ENCODE measurements at regions of chr16 and their contacts with region 1.

Region 1: DNA sequence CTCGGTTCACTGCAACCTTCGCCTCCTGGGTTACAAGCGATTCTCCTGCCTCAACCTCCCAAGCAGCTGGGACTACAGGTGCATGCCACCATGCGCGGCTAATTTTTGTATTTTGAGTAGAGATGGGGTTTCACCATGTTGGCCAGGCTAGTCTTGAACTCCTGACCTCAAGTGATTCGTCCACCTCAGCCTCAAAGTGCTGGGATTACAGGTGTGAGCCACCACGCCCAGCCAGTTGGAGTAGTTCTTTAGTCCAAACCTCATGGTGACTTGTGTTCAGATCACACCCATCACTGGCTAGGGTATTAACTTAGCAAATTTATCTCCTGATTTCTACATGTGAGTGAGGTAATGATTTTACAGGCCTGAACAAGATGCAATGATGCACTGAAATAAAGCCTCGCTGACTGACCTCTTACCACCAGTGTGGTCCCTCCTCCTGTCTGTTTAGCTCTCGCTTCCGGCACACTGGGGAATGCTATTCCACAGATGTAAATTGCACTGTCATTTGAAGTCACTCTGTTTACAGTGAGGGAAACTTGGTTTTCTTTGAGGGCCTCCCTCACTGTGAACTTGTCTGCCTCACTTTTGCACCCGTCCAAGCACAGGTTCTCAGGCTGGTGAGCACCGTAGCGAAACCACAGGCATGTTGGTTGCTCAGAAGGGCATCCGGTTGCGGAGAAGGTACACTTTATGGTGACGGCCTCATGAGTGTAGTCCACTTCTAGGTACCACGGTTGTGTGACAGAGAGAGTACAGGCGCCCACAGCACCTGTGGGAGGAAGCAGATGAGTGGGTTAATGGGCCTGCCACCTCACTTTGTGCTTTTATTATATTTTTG is 5.5 kb downstream of the IGSF6 start:
- DNase-seq: peak; percentile 77
- ATAC-seq: peak; percentile 86
- H3K4me3 ChIP-seq: peak overlapping the region in 2 of 5 experiments; percentile 2 to 8
- H3K4me3 Mint-ChIP-seq: peak overlapping the region; percentile 73
- H3K27ac ChIP-seq: peak overlapping the region; percentile 83 to 92
- H3K27ac Mint-ChIP-seq: peak overlapping the region; percentile 89
- H3K4me1 ChIP-seq: peaks cover 76 to 79% of the 10 kb centered on the region in 2 donors
- H3K4me1 Mint-ChIP-seq: peaks cover 69% of the 10 kb centered on the region
- H3K27me3 ChIP-seq: no peaks in the 10 kb centered on the region
- H3K27me3 Mint-ChIP-seq: no peaks in the 10 kb centered on the region
- CTCF ChIP-seq: no peak

Region 2: GRCh38 chr16:21584817-21585216 is 62.1 kb before region 1 on chr16:
- CTCF ChIA-PET with region 1: interaction called, 66 read pairs
- POLR2A ChIA-PET with region 1: no interaction called
- intact Hi-C with region 1: no loop called
- DNase-seq: no peak
- ATAC-seq: no peak
- H3K4me3 ChIP-seq: no peak overlapping the region
- H3K4me3 Mint-ChIP-seq: no peak overlapping the region
- H3K27ac ChIP-seq: no peak overlapping the region
- H3K27ac Mint-ChIP-seq: no peak overlapping the region
- H3K4me1 ChIP-seq: peaks cover 0 to 9% of the 10 kb centered on the region in 2 donors
- H3K4me1 Mint-ChIP-seq: peaks cover 6% of the 10 kb centered on the region
- H3K27me3 ChIP-seq: no peaks in the 10 kb centered on the region
- H3K27me3 Mint-ChIP-seq: no peaks in the 10 kb centered on the region
- CTCF ChIP-seq: no peak

Region 3: GRCh38 chr16:21590287-21590686 is 56.7 kb before region 1 on chr16:
- CTCF ChIA-PET with region 1: interaction called, 15 read pairs
- POLR2A ChIA-PET with region 1: no interaction called
- intact Hi-C with region 1: no loop called
- DNase-seq: no peak
- ATAC-seq: no peak
- H3K4me3 ChIP-seq: peak overlapping the region in 1 of 5 experiments; percentile 11
- H3K4me3 Mint-ChIP-seq: no peak overlapping the region
- H3K27ac ChIP-seq: no peak overlapping the region
- H3K27ac Mint-ChIP-seq: peak overlapping the region; percentile 63
- H3K4me1 ChIP-seq: peaks cover 5 to 8% of the 10 kb centered on the region in 2 donors
- H3K4me1 Mint-ChIP-seq: peaks cover 14% of the 10 kb centered on the region
- H3K27me3 ChIP-seq: no peaks in the 10 kb centered on the region
- H3K27me3 Mint-ChIP-seq: peaks cover 4% of the 10 kb centered on the region
- CTCF ChIP-seq: no peak

Region 4: DNA sequence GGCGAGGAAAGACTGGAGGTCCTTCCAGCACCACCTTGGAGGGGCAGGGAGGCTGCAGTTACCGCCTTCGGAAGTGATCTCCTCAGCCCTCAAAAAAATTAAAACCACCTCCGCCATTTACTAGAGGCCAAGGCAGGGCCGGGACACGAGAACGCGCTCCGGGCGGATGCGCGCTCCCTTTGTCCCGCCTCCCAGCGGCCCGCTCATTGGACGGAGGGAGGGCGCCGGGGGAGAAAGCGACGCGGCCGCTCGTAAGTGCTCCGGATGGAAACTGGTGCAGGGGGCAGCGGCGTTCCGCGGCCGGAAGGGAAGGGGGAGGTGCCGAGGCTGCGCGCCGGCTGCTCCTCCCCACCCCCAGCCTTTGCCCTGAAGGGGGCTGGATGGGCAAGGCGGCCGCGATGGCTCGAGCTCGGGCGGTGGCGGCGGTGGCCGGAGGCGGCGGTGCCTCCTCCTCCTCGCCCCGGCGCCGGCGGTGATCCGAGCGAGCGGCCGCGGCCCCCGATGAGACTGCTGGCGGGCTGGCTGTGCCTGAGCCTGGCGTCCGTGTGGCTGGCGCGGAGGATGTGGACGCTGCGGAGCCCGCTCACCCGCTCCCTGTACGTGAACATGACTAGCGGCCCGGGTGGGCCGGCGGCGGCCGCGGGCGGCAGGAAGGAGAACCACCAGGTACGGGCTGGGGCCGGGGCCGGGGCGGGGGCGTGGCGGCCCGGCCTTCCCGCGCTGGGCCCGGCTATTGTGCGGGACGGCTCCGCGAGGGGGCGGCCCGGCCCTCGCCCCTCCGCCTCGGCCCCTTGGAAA is 47.5 kb before region 1 on chr16 and contains the start of gene METTL9:
- CTCF ChIA-PET with region 1: interaction called, 5 read pairs
- POLR2A ChIA-PET with region 1: no interaction called
- intact Hi-C with region 1: loop called (anchors 1 kb)
- DNase-seq: peak; percentile 97
- ATAC-seq: peak; percentile 89
- H3K4me3 ChIP-seq: peak within 1 kb of the TSS; percentile 70 to 95 (median 82)
- H3K4me3 Mint-ChIP-seq: peak within 1 kb of the TSS; percentile 88
- H3K27ac ChIP-seq: peak within 1 kb of the TSS; percentile 83 to 91
- H3K27ac Mint-ChIP-seq: peak within 1 kb of the TSS; percentile 94
- H3K4me1 ChIP-seq: peaks cover 13 to 17% of the 10 kb centered on the region in 2 donors
- H3K4me1 Mint-ChIP-seq: peaks cover 35% of the 10 kb centered on the region
- H3K27me3 ChIP-seq: no peaks in the 10 kb centered on the region
- H3K27me3 Mint-ChIP-seq: no peaks in the 10 kb centered on the region
- CTCF ChIP-seq: no peak
- total RNA-seq, gene METTL9: 57.3 and 57.7 TPM in 2 replicates

Region 5: DNA sequence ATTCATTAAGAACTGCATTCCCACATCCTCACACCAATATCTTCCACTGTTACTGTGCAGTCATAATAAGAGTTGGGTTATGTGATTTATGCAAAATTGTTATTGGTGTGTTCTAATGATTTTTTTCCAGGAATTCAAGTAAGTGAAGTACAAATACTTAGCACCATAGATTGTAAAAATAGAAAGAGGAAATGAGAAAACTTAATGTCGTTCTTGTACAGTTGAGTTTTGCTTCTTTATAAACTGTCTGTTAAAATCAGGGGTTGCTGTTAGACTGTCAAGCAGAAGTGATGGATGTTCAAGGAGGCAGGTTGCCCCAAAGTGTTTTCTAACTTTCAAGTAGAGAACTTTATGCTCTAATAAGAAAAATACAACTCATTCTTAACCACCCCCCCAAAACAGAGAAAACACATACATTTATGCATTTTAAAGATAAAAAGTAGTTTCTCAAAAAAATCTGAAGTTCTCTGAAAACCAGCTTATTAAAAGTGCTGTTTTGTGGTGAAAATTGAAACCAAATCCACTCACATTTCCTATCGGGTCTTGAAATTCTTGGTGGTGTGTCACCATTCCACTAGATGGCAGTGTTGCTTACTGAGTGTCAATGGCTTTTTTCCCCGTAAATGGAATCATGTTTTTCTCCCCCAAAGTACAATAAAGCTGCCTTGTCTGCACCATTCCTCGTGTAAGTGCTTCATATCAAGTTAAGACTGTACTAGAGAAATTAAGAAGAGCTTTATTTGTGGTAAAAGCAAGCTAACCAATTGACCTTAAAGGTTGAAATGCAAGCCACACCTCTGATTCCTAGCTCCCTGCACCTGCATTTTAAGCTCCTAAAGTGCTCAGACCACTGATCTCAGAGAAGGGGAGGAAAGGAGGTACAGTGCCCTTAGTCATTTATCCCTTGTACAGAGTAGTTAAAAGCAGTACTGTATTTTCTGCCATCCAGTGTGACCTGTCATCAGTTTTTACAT is 10.1 kb after region 1 on chr16:
- CTCF ChIA-PET with region 1: interaction called, 159 read pairs
- POLR2A ChIA-PET with region 1: interaction called, 4 read pairs
- intact Hi-C with region 1: loop called (anchors 1 kb)
- DNase-seq: peak; percentile 81
- ATAC-seq: peak; percentile 82
- H3K4me3 ChIP-seq: peak overlapping the region in 3 of 5 experiments; percentile 0 to 47 (median 44)
- H3K4me3 Mint-ChIP-seq: peak overlapping the region; percentile 79
- H3K27ac ChIP-seq: peak overlapping the region; percentile 51 to 78
- H3K27ac Mint-ChIP-seq: peak overlapping the region; percentile 88
- H3K4me1 ChIP-seq: peaks cover 74 to 77% of the 10 kb centered on the region in 2 donors
- H3K4me1 Mint-ChIP-seq: peaks cover 82% of the 10 kb centered on the region
- H3K27me3 ChIP-seq: no peaks in the 10 kb centered on the region
- H3K27me3 Mint-ChIP-seq: no peaks in the 10 kb centered on the region
- CTCF ChIP-seq: peak; percentile 92

Region 6: DNA sequence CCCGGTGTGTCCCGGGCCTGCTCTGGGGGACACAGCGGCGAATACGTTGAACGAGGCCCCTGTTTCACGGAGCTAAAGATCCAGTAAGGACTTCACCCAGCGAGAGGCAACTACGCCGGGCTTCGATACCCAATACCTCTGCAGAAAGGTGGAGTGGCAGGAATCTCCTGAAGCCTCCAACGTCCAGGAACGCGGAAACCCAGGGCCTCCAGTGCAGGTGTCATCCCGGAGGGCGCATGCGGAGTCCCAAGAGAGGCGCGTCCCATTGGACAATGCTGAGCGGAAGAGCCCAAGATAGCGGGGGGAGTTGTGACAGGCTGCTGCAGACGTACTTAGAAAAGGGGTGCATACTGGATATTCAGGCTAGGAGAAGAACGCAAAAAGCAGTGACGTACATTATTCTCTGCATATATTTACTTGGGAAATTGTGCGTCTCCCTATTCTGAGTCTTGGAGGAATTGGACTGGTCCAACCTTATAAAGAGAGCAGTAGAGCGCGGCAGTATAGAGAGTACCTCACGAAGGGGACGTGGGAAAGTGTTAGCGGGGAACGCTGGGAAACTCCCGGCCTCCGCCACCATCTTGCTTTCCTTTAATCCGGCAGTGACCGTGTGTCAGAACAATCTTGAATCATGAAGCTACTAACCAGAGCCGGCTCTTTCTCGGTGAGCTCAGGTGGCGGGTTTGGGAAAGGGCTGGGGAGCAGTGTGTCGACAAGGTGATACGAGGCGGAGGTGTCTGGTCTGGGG is 306.0 kb after region 1 on chr16 and contains the start of gene UQCRC2:
- CTCF ChIA-PET with region 1: no interaction called
- POLR2A ChIA-PET with region 1: no interaction called
- intact Hi-C with region 1: loop called (anchors 5 kb)
- DNase-seq: peak; percentile 96
- ATAC-seq: peak; percentile 91
- H3K4me3 ChIP-seq: peak within 1 kb of the TSS; percentile 74 to 100 (median 97)
- H3K4me3 Mint-ChIP-seq: peak within 1 kb of the TSS; percentile 98
- H3K27ac ChIP-seq: peak within 1 kb of the TSS; percentile 88 to 97
- H3K27ac Mint-ChIP-seq: peak within 1 kb of the TSS; percentile 97
- H3K4me1 ChIP-seq: peaks cover 34 to 45% of the 10 kb centered on the region in 2 donors
- H3K4me1 Mint-ChIP-seq: peaks cover 65% of the 10 kb centered on the region
- H3K27me3 ChIP-seq: no peaks in the 10 kb centered on the region
- H3K27me3 Mint-ChIP-seq: no peaks in the 10 kb centered on the region
- CTCF ChIP-seq: no peak
- total RNA-seq, gene UQCRC2: 150 and 155 TPM in 2 replicates

Region 7: DNA sequence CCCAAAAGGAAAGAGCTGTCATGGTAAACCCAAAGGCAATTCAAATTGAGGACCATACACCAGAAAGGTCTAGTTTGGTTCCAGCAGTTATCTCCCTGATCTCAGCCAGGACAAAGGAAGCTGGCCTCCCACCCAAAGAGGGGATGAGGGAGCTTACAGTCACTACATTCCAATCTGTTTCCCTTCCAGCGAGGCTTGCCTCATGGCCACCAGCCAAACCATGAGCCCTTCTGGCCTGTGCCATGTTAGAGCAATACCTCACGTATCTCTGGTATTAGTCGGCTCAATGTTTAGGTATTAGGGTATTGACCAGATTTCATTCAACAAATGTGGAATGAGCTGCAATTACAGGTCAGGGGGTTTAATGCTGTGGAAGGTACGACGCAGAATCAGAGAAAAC is 1940.8 kb after region 1 on chr16:
- CTCF ChIA-PET with region 1: no interaction called
- POLR2A ChIA-PET with region 1: no interaction called
- intact Hi-C with region 1: no loop called
- DNase-seq: no peak
- ATAC-seq: no peak
- H3K4me3 ChIP-seq: no peak overlapping the region
- H3K4me3 Mint-ChIP-seq: no peak overlapping the region
- H3K27ac ChIP-seq: no peak overlapping the region
- H3K27ac Mint-ChIP-seq: no peak overlapping the region
- H3K4me1 ChIP-seq: no peaks in the 10 kb centered on the region
- H3K4me1 Mint-ChIP-seq: peaks cover 3% of the 10 kb centered on the region
- H3K27me3 ChIP-seq: no peaks in the 10 kb centered on the region
- H3K27me3 Mint-ChIP-seq: no peaks in the 10 kb centered on the region
- CTCF ChIP-seq: no peak

Measured in B cell (primary cell).